AG04450 (cell line): ENCODE measurements at regions of chr17 and their contacts with region 1.

Region 1: DNA sequence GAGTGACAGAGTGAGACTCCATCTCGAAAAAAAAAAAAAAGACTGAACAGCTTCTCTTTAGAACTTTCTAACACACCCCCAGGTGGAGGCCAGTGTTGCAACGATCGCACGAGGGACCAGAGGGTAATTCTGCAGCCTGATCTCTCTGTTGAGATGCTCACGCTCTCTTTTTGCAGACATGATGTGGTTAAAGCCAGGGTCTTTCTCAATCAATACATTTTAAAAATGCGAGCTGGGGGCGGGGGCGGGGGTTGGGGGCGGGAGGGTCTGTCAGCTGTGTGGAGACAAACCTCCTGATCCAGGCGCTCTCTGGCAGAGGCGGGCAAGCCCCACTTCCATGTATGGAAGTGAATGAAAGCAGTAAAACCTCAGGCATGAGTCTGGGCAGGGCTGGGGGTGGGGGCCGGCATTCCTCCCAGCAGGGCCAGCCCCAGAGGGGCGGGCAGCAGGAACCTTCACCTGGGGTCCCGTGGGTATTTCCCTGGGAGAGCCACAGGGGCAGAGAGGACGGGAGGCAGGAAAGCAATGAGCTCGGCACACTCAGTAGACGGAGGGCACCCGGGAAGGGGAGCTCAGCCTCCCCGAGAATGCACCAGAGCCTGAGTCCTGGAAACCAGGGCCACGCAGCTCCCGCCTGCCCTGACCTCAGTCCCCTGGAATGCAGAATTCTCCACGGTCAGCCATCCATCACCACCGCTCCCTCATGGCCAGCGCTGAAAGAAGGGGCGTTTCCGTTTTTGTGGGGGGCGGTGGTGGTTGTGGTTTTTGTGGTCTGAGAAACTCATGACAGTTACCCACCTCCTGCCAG is 28.0 kb downstream of the NXN start:
- DNase-seq: peak; percentile 73
- H3K4me3 ChIP-seq: peak overlapping the region; percentile 29
- H3K27ac ChIP-seq: peak overlapping the region; percentile 98
- H3K27me3 ChIP-seq: no peaks in the 10 kb centered on the region
- CTCF ChIP-seq: 0 out of 2 replicates have a peak, but pooled peaks have one; percentile 8

Region 2: GRCh38 chr17:681738-682529 is 269.6 kb before region 1 on chr17:
- CTCF ChIA-PET with region 1: no interaction called
- POLR2A ChIA-PET with region 1: no interaction called
- DNase-seq: no peak
- H3K4me3 ChIP-seq: no peak overlapping the region
- H3K27ac ChIP-seq: peak overlapping the region; percentile 89
- H3K27me3 ChIP-seq: no peaks in the 10 kb centered on the region
- CTCF ChIP-seq: no peak

Region 3: DNA sequence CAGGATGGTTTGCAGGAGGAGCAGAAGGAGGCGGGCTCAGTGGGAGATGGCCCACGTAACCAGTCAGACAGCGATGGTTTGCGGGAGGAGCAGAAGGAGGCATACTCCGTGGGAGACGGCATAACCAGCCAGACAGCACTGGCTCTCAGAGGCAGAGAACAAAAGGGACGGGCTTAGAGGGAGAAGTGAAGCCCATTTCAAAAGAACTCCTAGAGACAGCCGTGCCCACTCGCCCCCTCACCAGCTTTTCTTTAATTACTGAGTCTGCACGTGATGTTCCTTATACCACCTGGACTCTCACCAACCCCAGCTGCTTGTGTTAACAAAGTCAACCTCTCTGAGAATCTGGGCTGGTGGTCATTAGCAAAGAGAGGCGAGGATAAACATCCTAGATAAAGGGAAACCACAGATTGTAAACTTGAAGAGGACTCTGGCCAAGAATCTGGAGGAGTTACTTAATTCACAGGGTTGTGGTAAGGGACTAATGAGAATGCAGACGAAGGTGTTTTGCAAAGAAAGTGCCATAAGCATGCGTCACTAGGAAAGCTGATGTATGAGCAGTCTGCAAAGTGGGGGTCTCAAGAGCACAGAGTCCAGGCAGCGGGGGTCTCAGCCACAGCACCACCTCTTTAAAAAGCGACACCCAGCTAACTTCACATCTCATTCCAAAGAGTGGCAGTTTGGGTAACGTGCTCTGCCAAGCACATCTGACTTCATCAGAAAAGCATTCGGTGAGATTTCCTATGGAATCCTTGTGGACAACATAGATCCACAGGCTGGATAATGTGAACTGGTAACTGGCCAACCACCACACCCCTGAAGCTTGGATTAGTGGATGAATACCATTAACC is 23.7 kb before region 1 on chr17:
- CTCF ChIA-PET with region 1: no interaction called
- POLR2A ChIA-PET with region 1: interaction called, 29 read pairs
- DNase-seq: peak; percentile 94
- H3K4me3 ChIP-seq: peak overlapping the region; percentile 10; the same call in 1 of the 2 replicates
- H3K27ac ChIP-seq: peak overlapping the region; percentile 94
- H3K27me3 ChIP-seq: no peaks in the 10 kb centered on the region
- CTCF ChIP-seq: no peak

Region 4: GRCh38 chr17:933312-934083 is 18.0 kb before region 1 on chr17:
- CTCF ChIA-PET with region 1: no interaction called
- POLR2A ChIA-PET with region 1: interaction called, 29 read pairs
- DNase-seq: peak; percentile 96
- H3K4me3 ChIP-seq: peak overlapping the region; percentile 10; the same call in 1 of the 2 replicates
- H3K27ac ChIP-seq: peak overlapping the region; percentile 92
- H3K27me3 ChIP-seq: no peaks in the 10 kb centered on the region
- CTCF ChIP-seq: no peak